Activated T-helper 2 cell treated with anti-CD3 and anti-CD28 coated beads, Interferon-gamma antibody, Interleukin-2, Interleukin-4, amounts not matched to agents 10 μg/mL and 5 μg/mL and 100 μg/mL, durations not matched to agents 14 hours and 24 hours and 36 hours (primary cell): ENCODE measurements at regions of chr16 and their contacts with region 1.

Region 1: GRCh38 chr16:50335196-50335958 is 33.4 kb downstream of the BRD7 start:
- DNase-seq: no peak
- H3K4me3 Mint-ChIP-seq: no peak overlapping the region
- H3K27ac Mint-ChIP-seq: peak overlapping the region; percentile 93
- H3K4me1 Mint-ChIP-seq: peaks cover 35% of the 10 kb centered on the region
- H3K27me3 Mint-ChIP-seq: no peaks in the 10 kb centered on the region

Region 2: GRCh38 chr16:50024684-50025536 is 310.5 kb before region 1 on chr16 and contains the start of gene CNEP1R1:
- intact Hi-C with region 1: loop called (anchors 10 kb)
- DNase-seq: peak; percentile 93
- H3K4me3 Mint-ChIP-seq: peak within 1 kb of the TSS; percentile 95
- H3K27ac Mint-ChIP-seq: peak within 1 kb of the TSS; percentile 84
- H3K4me1 Mint-ChIP-seq: peaks cover 18% of the 10 kb centered on the region
- H3K27me3 Mint-ChIP-seq: peaks cover 4% of the 10 kb centered on the region
- total RNA-seq, gene CNEP1R1: 23.4 and 26.1 TPM in 2 replicates

Region 3: DNA sequence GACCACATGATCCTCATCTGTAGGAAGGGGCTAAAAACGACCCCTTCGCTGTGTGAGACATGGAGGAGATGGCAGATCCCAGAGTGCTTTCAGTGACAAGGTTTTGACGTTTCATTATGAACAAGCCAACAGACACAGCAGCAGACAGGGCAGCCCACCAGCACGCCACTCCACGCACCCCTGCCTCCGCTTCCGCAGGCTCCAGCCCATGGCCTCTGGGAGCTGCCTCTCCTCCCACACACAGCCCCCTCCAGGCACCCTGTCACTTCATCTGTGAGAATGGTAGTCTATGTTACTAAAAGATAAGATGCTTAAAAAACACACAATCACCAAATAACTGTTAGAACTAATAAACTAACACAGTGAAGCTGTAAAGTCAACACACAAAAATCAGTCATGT is 81.3 kb before region 1 on chr16:
- intact Hi-C with region 1: no loop called
- DNase-seq: no peak
- H3K4me3 Mint-ChIP-seq: no peak overlapping the region
- H3K27ac Mint-ChIP-seq: no peak overlapping the region
- H3K4me1 Mint-ChIP-seq: peaks cover 3% of the 10 kb centered on the region
- H3K27me3 Mint-ChIP-seq: peaks cover 28% of the 10 kb centered on the region

Region 4: GRCh38 chr16:50354629-50355456 is 19.5 kb after region 1 on chr16:
- intact Hi-C with region 1: loop called (anchors 2 kb)
- DNase-seq: no peak
- H3K4me3 Mint-ChIP-seq: no peak overlapping the region
- H3K27ac Mint-ChIP-seq: peak overlapping the region; percentile 47
- H3K4me1 Mint-ChIP-seq: peaks cover 17% of the 10 kb centered on the region
- H3K27me3 Mint-ChIP-seq: no peaks in the 10 kb centered on the region

Region 5: GRCh38 chr16:50665128-50665878 is 329.9 kb after region 1 on chr16:
- intact Hi-C with region 1: loop called (anchors 5 kb)
- DNase-seq: peak; percentile 74
- H3K4me3 Mint-ChIP-seq: peak overlapping the region; percentile 55
- H3K27ac Mint-ChIP-seq: peak overlapping the region; percentile 17
- H3K4me1 Mint-ChIP-seq: peaks cover 34% of the 10 kb centered on the region
- H3K27me3 Mint-ChIP-seq: no peaks in the 10 kb centered on the region

Region 6: DNA sequence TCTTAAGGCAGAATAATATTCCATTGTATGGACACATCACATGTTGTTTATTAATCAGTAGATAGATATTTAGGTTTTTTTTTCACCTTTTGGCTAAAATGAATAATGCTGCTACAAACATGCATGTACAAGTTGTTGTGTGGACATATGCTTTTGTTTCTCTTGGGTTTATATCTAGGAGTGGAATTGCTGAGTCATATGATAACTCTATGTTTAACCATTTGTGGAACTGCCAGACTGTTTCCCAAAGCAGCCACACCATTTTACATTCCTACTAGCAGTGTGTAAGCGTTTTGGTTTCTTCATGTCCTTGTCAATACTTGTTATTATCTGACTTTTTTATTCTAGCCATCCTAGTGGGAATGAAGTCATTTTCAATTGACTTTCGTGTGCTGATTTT is 427.8 kb after region 1 on chr16:
- intact Hi-C with region 1: loop called (anchors 5 kb)
- DNase-seq: no peak
- H3K4me3 Mint-ChIP-seq: no peak overlapping the region
- H3K27ac Mint-ChIP-seq: peak overlapping the region; percentile 24
- H3K4me1 Mint-ChIP-seq: peaks cover 65% of the 10 kb centered on the region
- H3K27me3 Mint-ChIP-seq: no peaks in the 10 kb centered on the region